Right lobe of liver (tissue), 6 donors: ENCODE measurements at regions of chr2 and their contacts with region 1.

Region 1: DNA sequence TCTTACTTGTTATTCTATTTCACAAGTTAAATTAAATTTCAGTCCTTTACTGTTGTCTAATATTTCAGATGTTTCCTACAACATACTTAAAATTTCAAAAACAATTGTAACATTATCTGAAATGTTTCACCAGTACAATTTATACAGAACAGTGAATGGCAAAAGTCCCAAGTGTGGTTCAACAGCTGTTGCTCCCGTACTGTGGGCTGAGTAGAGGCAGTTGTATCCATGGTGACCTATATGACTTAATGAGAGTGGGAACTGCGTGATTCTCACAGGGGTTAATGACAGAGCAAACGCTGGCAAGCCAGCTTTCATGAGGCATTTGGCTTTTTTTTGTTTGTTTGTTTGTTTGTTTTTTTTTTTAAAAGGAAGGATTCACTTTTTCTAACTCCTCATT is 5.3 kb upstream of the PLCL1 start:
- DNase-seq: no peak
- ATAC-seq: no peak
- H3K4me3 ChIP-seq: no peak overlapping the region
- H3K27ac ChIP-seq: no peak overlapping the region
- H3K4me1 ChIP-seq: peaks cover 0 to 4% (median 2%) of the 10 kb centered on the region in 4 donors
- H3K27me3 ChIP-seq: no peaks in the 10 kb centered on the region
- CTCF ChIP-seq: no peak
- POLR2A ChIP-seq: no peak

Region 2: DNA sequence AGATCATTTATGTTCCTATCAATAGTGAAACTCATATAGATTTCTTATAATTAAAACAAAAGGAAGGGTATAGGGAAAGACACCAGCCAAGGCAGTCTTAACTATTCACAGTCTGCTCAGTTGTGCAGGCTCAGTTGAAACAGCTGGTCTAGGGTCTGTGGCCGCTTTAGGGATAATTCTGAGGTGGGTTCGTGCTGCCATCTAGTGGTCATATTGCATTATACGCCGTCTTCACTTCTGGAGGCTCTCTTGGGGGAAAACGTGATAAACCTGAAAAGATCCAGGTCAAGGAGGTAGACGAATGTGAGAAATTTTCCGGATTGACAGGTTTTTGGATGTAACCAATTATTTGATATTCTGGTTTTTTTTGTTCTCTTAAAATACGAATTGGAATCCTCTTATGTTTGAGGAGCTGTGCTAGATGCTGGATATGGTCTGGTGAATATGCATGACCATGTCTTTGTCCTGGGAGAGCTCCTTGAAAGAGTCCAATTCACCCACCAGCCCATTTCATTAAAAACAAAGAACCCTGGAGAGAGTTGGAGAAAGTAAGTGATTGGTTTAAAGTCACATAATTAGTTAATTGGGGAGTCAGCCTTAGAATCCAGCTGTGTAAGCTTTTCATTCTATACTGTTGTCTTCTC is 497.7 kb after region 1 on chr2:
- intact Hi-C with region 1: loop called in 1 of 2 experiments (anchors 10 kb)
- DNase-seq: no peak
- ATAC-seq: peak; percentile 68 to 84 (median 84)
- H3K4me3 ChIP-seq: no peak overlapping the region
- H3K27ac ChIP-seq: no peak overlapping the region
- H3K4me1 ChIP-seq: no peaks in the 10 kb centered on the region
- H3K27me3 ChIP-seq: no peaks in the 10 kb centered on the region
- CTCF ChIP-seq: peak; percentile 52 to 82 (median 82)
- POLR2A ChIP-seq: no peak